Activated naive CD4-positive, alpha-beta T cell treated with anti-CD3 and anti-CD28 coated beads for 36 hours (primary cell): ENCODE measurements at regions of chr1 and their contacts with region 1.

Region 1: GRCh38 chr1:201023517-201023902 is at the start of gene KIF21B:
- DNase-seq: peak; percentile 91
- H3K4me3 Mint-ChIP-seq: peak within 1 kb of the TSS; percentile 90
- H3K27ac Mint-ChIP-seq: peak within 1 kb of the TSS; percentile 100
- H3K4me1 Mint-ChIP-seq: peaks cover 72% of the 10 kb centered on the region
- H3K27me3 Mint-ChIP-seq: no peaks in the 10 kb centered on the region
- total RNA-seq, gene KIF21B: 45.5 to 46.3 TPM

Region 2: DNA sequence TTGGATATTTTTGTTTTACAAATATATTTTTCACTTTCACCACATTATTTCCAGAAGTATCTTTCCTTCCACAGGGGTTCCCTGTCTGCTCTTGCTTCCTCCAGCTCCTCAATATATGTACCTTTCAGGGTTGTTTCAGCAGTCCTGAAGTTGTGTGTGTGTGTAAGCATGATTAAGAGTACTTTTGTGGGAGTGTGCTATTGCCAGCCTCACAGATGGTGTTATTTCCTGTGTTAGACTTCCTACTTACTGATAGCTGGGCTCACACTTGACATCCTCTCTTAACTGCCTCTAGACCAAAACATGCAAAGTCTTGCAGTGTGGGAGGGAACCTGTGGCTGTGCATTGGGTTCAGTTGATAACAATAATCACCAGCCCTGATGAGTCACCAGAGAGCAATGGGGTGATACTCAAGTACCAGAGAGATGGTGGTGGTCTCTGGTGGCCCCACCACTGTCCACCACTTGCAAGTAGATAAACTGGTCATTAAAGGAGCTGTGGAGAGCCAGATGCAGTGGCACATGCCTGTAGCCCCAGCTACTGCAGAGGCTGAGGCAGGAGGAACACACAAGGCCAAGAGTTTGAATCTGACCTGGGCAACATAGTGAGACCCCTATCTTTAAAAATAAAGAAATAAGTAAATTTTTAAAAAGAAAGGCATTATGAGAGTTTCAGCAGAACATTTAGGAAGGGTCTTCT is 869.3 kb before region 1 on chr1:
- CTCF ChIA-PET with region 1: no interaction called
- intact Hi-C with region 1: loop called (anchors 5 kb)
- DNase-seq: peak; percentile 74
- H3K4me3 Mint-ChIP-seq: peak overlapping the region; percentile 10
- H3K27ac Mint-ChIP-seq: peak overlapping the region; percentile 87
- H3K4me1 Mint-ChIP-seq: peaks cover 45% of the 10 kb centered on the region
- H3K27me3 Mint-ChIP-seq: no peaks in the 10 kb centered on the region

Region 3: DNA sequence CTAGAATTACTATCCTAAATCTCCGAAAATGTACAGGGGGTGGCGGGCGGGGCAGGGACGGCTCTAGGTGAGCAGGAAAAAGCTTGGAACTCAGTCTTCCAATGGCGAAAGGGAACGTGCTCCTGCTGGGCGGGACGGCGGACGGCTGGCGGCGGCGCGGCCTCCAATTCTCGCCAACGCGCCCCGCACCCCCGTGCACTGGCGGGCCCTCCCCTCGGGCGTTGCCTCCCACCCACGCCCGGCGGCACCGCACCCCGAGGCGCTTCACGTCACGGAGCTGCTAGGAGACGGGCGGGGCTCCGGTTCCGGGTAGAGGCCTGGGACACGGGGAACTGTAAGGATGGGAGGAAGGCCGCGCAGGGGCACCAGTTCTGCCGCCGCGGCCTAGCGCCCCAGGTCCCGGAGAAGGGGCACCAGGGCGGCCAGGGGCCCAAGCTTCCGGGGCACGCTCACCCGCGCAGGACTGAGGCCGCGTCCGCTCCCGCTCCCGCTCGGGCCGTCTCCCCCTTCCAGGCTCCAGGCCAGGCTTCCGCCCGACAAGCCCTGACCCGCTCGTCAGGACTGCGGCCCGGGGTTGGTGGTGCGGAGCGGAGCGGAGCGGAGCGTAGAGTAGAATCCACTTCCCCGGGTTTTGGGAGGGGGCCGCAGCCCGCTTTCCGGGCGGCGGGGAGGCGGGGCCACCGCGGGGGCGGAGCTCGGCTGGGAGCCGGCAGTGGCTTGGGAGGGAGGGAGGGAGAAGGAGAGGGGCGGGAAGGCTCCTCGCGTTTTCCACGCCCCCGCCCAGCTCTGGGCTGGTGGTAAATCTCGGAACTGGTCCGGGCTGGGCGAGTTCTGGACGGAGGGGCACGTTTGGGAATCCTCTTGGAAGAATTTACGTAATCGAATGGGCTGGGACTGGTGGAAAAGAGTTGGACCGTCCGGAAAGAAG is 353.9 kb before region 1 on chr1 and contains the start of gene DDX59:
- CTCF ChIA-PET with region 1: no interaction called
- intact Hi-C with region 1: loop called (anchors 1 kb)
- DNase-seq: peak; percentile 93
- H3K4me3 Mint-ChIP-seq: peak within 1 kb of the TSS; percentile 100
- H3K27ac Mint-ChIP-seq: peak within 1 kb of the TSS; percentile 99
- H3K4me1 Mint-ChIP-seq: peaks cover 35% of the 10 kb centered on the region
- H3K27me3 Mint-ChIP-seq: no peaks in the 10 kb centered on the region
- total RNA-seq, gene DDX59: 20.9 to 22.7 TPM

Region 4: DNA sequence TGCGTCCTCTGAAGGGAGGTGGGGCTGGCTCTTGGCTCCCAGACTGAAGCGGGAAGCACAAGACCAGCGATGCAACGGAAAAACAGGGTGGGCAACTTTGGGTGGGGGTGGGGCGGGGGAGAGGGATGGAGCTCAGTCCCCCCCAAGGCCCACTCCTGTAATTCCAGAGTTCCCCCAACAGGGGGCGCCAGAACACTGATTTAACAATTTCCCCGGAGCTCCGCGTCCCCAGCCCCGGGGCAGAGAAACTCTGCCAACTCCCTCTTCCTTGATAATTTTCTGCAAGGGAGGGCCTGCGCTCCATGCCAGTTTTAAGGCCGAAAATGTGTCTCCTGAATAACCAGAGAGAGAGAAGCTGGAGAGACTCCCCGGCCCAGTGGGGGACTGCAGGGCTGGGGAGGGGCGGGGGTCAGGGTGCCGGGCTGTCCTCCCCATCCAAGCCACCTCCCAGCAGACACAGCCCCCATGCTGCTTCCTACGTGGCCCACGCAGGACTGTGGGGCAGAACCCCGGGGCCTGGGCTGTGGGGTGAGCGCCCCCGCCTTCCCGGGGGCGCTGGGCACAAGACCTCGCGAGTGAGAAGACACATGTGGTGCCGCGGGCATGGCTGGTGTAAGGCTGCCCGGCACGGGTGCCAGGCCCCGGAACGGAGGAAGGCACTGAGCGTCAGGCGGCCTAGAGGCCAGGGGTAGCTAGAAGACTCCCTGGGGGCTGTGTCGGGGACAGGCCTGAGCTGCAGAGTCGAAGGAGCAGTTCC is 51.4 kb before region 1 on chr1:
- CTCF ChIA-PET with region 1: interaction called, 28 read pairs
- intact Hi-C with region 1: loop called (anchors 1 kb)
- DNase-seq: peak; percentile 76
- H3K4me3 Mint-ChIP-seq: no peak overlapping the region
- H3K27ac Mint-ChIP-seq: no peak overlapping the region
- H3K4me1 Mint-ChIP-seq: peaks cover 4% of the 10 kb centered on the region
- H3K27me3 Mint-ChIP-seq: no peaks in the 10 kb centered on the region

Region 5: GRCh38 chr1:201009962-201010645 is 13.4 kb before region 1 on chr1:
- CTCF ChIA-PET with region 1: interaction called, 17 read pairs
- intact Hi-C with region 1: no loop called
- DNase-seq: no peak
- H3K4me3 Mint-ChIP-seq: no peak overlapping the region
- H3K27ac Mint-ChIP-seq: no peak overlapping the region
- H3K4me1 Mint-ChIP-seq: peaks cover 48% of the 10 kb centered on the region
- H3K27me3 Mint-ChIP-seq: no peaks in the 10 kb centered on the region

Region 6: GRCh38 chr1:201053158-201053860 is 29.8 kb after region 1 on chr1:
- CTCF ChIA-PET with region 1: interaction called, 4 read pairs
- intact Hi-C with region 1: loop called (anchors 1 kb)
- DNase-seq: no peak
- H3K4me3 Mint-ChIP-seq: no peak overlapping the region
- H3K27ac Mint-ChIP-seq: no peak overlapping the region
- H3K4me1 Mint-ChIP-seq: peaks cover 13% of the 10 kb centered on the region
- H3K27me3 Mint-ChIP-seq: no peaks in the 10 kb centered on the region

Region 7: GRCh38 chr1:201096977-201097856 is 73.7 kb after region 1 on chr1:
- CTCF ChIA-PET with region 1: no interaction called
- intact Hi-C with region 1: no loop called
- DNase-seq: no peak
- H3K4me3 Mint-ChIP-seq: no peak overlapping the region
- H3K27ac Mint-ChIP-seq: no peak overlapping the region
- H3K4me1 Mint-ChIP-seq: no peaks in the 10 kb centered on the region
- H3K27me3 Mint-ChIP-seq: no peaks in the 10 kb centered on the region

Region 8: GRCh38 chr1:201176940-201177339 is 153.4 kb after region 1 on chr1:
- CTCF ChIA-PET with region 1: no interaction called
- intact Hi-C with region 1: no loop called
- DNase-seq: no peak
- H3K4me3 Mint-ChIP-seq: no peak overlapping the region
- H3K27ac Mint-ChIP-seq: no peak overlapping the region
- H3K4me1 Mint-ChIP-seq: peaks cover 7% of the 10 kb centered on the region
- H3K27me3 Mint-ChIP-seq: peaks cover 12% of the 10 kb centered on the region

Region 9: DNA sequence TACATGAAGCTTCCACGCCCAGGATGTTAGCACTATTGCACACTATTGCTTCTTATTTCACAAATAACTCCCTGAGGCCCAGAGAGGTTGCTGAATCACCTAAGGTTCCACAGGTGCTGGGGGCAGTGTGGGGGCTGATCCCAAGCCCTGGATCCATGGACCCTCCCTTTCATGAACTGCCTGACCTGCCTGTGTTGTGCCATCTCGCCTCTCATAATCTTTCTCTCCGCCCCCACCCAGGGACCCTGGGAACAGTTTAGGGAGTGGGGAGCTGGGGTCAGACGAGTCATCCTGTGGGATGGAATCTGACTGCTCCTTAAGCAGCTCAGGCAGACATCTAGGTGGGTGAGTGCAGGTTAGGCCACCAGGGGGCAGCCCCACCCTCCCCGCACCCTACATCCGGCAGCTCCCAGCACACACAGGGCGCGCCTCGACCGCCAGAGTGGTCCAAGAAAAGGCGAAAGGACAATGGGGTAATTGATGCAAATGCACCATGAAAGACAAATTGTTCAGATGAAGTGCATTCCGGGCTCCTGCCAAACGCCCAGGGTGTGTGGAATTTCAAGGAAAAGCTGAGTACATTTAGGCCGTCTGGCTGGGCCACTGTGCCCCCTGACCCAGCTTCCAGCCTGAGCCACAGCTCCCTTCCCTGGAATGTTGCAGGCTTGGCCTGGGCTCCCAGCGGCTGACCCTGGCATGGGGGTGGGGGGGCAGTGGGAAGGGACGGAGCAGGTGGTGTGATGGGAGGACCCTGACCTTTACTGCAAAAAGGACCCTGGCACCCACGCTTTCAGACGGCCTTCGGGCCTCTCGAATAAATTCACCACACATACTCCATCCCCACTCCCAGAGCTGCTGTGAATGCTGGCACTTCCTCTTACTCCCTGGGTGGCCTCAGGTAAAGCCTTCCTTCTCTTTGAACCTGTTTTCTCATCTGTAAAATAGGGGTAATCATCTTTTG is 424.7 kb after region 1 on chr1:
- CTCF ChIA-PET with region 1: no interaction called
- intact Hi-C with region 1: loop called (anchors 5 kb)
- DNase-seq: peak; percentile 81
- H3K4me3 Mint-ChIP-seq: no peak overlapping the region
- H3K27ac Mint-ChIP-seq: no peak overlapping the region
- H3K4me1 Mint-ChIP-seq: peaks cover 6% of the 10 kb centered on the region
- H3K27me3 Mint-ChIP-seq: peaks cover 24% of the 10 kb centered on the region

Region 10: DNA sequence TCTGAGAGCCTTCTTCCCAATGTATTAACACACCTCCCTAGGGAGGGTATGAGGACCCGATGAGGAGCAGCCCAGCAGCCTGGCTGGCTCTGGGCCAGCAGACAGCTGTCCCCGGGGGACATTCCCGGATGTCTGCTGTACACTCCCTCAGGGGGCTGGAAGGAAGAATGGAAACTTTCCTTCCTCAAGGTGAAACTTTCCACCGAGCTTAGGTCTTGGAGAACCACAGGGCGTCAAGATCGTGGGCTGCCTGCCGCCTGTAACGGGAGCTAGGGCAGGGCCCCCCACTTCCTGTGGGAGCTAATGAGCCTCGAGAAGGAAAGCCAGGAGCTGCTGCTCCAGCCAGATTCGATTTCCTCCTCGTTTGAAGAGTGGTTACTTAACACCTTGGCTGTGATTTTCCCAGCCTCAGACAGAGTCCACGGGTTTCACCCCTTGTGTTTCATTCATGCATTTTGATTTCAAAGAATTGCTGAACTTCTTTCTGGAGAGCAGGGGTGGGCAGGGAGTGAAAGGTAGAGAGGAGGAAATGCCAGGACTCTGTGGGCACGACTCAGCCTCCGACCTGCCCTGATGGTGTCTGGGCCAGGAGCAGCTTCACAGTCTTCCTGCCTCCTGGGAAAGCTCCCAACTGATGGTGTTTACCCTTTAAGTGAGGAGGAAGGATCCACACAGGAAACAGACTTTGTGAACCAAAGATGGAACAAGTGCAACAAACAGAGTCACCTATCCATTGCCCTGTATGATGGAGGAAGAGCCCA is 1288.5 kb after region 1 on chr1:
- CTCF ChIA-PET with region 1: no interaction called
- intact Hi-C with region 1: no loop called
- DNase-seq: no peak
- H3K4me3 Mint-ChIP-seq: no peak overlapping the region
- H3K27ac Mint-ChIP-seq: no peak overlapping the region
- H3K4me1 Mint-ChIP-seq: peaks cover 2% of the 10 kb centered on the region
- H3K27me3 Mint-ChIP-seq: peaks cover 2% of the 10 kb centered on the region